GM10248 (cell line): ENCODE measurements at regions of chr11 and their contacts with region 1.

Region 1: GRCh38 chr11:61581030-61581928 is at the start of gene SYT7:
- DNase-seq: peak; percentile 95
- CTCF ChIP-seq: peak; percentile 56

Region 2: GRCh38 chr11:61567286-61568061 is 13.8 kb before region 1 on chr11:
- CTCF ChIA-PET with region 1: interaction called, 11 read pairs
- POLR2A ChIA-PET with region 1: no interaction called
- DNase-seq: peak; percentile 84
- CTCF ChIP-seq: peak; percentile 6